Activated CD4-positive, alpha-beta T cell treated with anti-CD3 and anti-CD28 coated beads for 36 hours (primary cell): ENCODE measurements at regions of chr6 and their contacts with region 1.

Region 1: DNA sequence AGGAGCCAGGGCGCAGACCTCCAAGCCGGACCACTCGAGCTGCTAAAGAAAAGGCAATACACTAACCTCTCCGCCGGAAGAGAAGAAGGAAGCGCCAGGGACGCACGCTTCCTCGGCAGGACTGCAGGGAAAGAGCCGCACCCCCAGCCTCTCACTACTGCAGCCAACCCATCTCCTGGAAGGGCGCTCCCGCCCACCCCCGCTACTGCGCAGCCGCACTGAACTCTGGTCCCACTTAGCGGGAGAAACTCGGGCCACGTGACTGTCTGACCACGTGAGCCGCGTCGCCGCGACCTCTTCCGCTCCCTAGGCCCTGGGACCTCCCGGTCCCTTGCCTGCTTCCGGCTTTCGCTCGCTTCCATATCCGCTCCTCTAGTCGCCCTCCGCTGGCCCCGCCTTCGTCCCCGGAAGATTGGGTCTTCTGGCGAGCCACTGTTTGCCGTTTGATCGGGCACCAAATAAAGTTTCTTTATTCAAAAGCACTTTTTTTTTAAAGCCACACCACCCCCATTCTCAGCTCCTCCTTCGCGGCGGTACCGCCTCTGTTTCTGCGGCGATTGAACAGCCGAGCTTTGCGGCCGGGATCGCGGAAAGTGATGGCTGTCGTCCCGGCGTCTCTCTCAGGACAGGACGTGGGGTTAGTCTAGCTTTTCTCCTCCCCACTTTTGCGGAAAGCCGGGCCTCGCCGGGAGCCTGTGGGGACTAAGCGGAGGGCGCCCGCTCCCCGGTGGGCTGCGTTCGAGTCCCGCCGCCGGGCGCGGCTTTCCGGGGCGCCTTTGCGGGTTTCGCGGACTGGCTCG is at the start of gene RMND1:
- DNase-seq: peak; percentile 100
- ATAC-seq: peak; percentile 98
- H3K4me3 Mint-ChIP-seq: peak within 1 kb of the TSS; percentile 96
- H3K27ac Mint-ChIP-seq: peak within 1 kb of the TSS; percentile 85
- H3K4me1 Mint-ChIP-seq: peaks cover 30% of the 10 kb centered on the region
- H3K27me3 Mint-ChIP-seq: no peaks in the 10 kb centered on the region
- total RNA-seq, gene RMND1: 20.8 to 21.5 TPM

Region 2: DNA sequence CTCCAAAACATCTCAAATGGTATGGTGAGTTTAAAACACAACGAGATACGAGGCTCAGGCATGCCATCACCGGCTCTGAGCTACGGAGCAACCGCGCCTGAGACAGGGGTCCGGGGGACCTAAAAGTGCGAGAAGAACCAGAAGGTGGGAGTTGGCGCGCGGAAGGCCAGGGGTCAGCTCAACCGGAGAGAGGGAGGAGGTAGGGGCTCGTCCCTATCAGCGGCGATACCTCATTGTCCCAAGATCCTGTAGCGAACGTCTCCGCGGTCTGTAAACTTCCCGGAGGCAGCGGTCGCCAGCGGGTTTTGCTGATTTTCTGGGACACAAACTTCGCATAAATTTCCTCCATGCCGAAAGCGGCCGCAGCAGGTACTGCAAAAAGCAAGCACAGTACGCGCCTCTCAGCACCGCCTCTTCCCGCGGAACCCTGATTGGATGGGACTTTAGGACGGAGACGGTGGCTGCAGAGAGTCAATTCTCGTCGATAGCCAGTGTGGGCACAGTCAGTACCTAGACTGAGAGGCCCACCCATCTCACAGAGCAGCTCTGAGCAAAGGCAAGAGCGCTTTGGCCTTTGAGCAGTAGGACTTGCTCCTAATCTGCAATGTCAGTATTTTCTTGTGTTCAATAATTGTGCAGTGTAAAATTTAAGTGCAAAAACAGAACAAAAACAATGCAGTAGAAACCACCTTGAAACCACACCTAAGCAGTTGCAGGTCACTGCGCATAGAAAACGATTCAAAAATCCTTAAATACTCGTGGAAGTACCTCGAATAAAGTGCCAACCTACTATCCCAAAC is 1705.8 kb before region 1 on chr6 and contains the start of gene NUP43:
- CTCF ChIA-PET with region 1: no interaction called
- POLR2A ChIA-PET with region 1: no interaction called
- intact Hi-C with region 1: loop called in 1 of 2 experiments (anchors 5 kb)
- DNase-seq: peak; percentile 96
- ATAC-seq: peak; percentile 67
- H3K4me3 Mint-ChIP-seq: peak within 1 kb of the TSS; percentile 98
- H3K27ac Mint-ChIP-seq: peak within 1 kb of the TSS; percentile 96
- H3K4me1 Mint-ChIP-seq: peaks cover 27% of the 10 kb centered on the region
- H3K27me3 Mint-ChIP-seq: no peaks in the 10 kb centered on the region
- total RNA-seq, gene NUP43: 80.5 to 89.4 TPM

Region 3: GRCh38 chr6:150865406-150866146 is 586.6 kb before region 1 on chr6 and contains the start of gene MTHFD1L:
- CTCF ChIA-PET with region 1: no interaction called
- POLR2A ChIA-PET with region 1: no interaction called
- intact Hi-C with region 1: loop called in 1 of 2 experiments (anchors 1 kb)
- DNase-seq: peak; percentile 89
- ATAC-seq: peak; percentile 74
- H3K4me3 Mint-ChIP-seq: peak within 1 kb of the TSS; percentile 81
- H3K27ac Mint-ChIP-seq: peak within 1 kb of the TSS; percentile 94
- H3K4me1 Mint-ChIP-seq: peaks cover 38% of the 10 kb centered on the region
- H3K27me3 Mint-ChIP-seq: peaks cover 12% of the 10 kb centered on the region
- total RNA-seq, gene MTHFD1L: 103 to 129 TPM

Region 4: DNA sequence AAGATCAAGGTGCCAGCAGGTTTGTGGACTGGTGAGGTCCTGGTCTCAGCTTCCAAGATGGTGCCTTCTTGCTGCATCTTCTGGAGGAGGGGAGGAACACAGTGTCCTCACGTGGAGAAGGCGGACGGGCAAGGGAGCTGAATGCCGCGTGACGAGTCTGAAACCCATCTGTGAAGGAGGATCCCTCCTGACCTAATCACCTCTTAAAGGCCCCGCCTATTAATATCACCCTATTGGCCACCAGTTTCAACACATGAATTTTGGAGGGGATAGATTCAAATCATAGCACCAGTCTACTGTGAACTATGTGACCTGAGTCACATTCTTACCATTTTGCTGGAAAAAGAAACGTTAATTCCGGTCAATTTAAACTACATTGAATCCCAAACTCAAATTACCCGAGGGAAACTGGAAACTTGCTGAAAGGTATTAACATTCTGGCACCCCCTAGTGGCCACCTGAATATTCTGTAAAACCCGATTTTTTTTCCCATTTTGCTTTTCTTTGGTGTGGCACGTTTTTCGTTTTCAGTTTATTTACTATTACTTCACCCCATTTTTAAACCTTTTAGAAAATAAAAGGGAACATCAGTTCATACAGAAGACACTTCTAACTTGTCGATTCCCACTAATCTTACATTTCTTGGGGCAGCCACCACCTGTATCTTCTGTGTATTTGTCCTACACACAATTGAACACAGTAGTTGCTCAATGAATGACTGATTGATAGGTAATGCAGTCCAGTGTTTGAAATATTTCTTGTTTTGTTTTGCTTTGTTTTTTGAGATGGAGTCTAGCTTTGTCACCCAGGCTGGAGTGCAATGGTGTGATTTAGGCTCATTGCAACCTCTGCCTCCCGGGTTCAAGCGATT is 23.7 kb after region 1 on chr6:
- CTCF ChIA-PET with region 1: interaction called, 4 read pairs
- POLR2A ChIA-PET with region 1: no interaction called
- intact Hi-C with region 1: loop called in 1 of 2 experiments (anchors 1 kb)
- DNase-seq: peak; percentile 65
- ATAC-seq: peak; percentile 33
- H3K4me3 Mint-ChIP-seq: no peak overlapping the region
- H3K27ac Mint-ChIP-seq: no peak overlapping the region
- H3K4me1 Mint-ChIP-seq: no peaks in the 10 kb centered on the region
- H3K27me3 Mint-ChIP-seq: no peaks in the 10 kb centered on the region

Region 5: GRCh38 chr6:152301764-152302568 is 849.8 kb after region 1 on chr6:
- CTCF ChIA-PET with region 1: no interaction called
- POLR2A ChIA-PET with region 1: no interaction called
- intact Hi-C with region 1: loop called in 1 of 2 experiments (anchors 1 kb)
- DNase-seq: peak; percentile 95
- ATAC-seq: peak; percentile 92
- H3K4me3 Mint-ChIP-seq: peak overlapping the region; percentile 92
- H3K27ac Mint-ChIP-seq: peak overlapping the region; percentile 99
- H3K4me1 Mint-ChIP-seq: peaks cover 31% of the 10 kb centered on the region
- H3K27me3 Mint-ChIP-seq: no peaks in the 10 kb centered on the region

Region 6: DNA sequence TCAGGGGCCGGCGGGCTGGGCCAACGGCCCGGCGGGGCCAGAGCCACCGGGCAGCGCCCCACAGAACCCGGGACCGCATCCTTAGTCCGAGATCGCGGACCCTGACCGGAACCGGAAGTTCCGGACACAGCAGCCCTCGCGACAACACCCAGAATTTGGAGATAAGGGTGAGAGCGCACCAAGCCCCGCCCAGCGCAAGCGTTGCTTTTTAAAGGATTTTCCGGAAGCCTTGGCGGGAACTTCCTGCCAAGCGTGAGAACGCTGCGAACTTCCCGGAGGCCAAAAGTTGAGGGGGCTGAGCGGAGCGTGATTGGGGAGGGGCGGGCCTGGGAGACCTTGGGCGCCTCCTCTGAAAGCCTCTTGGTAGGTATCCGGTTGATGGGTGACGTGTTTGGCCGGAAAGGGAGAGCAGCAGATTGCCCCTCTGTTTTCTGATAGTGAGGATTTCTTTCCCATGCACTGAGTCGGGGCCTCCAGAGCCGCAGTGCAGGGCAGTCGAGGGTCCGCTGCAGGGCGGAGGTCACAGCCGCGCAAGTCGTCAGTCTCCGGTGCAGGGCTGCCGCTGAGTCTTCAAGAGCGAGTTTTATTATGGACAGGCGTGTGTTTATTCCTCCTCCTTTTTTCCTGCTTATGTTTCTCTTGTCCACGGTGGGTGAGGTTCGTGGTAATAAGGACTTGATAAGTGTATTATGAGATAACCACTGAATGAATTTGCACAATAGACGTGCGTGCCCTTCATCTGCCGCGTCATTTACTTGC is 1550.6 kb after region 1 on chr6 and contains the start of gene MTRF1L:
- CTCF ChIA-PET with region 1: no interaction called
- POLR2A ChIA-PET with region 1: no interaction called
- intact Hi-C with region 1: loop called in 1 of 2 experiments (anchors 5 kb)
- DNase-seq: peak; percentile 95
- ATAC-seq: peak; percentile 87
- H3K4me3 Mint-ChIP-seq: peak within 1 kb of the TSS; percentile 92
- H3K27ac Mint-ChIP-seq: peak within 1 kb of the TSS; percentile 99
- H3K4me1 Mint-ChIP-seq: peaks cover 36% of the 10 kb centered on the region
- H3K27me3 Mint-ChIP-seq: no peaks in the 10 kb centered on the region
- total RNA-seq, gene MTRF1L: 16.8 to 19.9 TPM